ENCODE measurements at regions of chr4 and their contacts with region 1.

Region 1: DNA sequence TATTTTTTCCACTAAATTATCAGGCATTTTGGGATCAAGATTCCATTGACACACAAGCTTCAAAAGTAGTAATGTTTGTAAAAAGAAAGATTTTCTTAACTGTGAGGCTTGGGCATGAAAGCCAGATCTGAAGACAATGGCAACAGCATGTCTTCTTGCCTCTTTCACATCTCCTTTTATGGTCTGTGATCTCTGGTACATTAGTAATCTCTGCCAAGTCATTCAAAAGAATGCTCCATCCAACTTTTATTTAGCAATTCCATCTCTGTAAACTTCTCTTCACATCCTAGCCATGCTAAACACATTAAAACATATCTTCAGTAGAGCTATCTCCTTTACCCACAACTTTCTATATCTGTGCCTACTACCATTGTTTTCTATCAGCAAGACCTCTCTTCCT is 465.4 kb downstream of the FAT4 start:
- DNase-seq: no peak
- ATAC-seq: no peak
- H3K4me3 ChIP-seq: no peak overlapping the region
- H3K27ac ChIP-seq: no peak overlapping the region
- H3K4me1 ChIP-seq: no peaks in the 10 kb centered on the region
- H3K27me3 ChIP-seq: no peaks in the 10 kb centered on the region
- CTCF ChIP-seq: no peak

Region 2: DNA sequence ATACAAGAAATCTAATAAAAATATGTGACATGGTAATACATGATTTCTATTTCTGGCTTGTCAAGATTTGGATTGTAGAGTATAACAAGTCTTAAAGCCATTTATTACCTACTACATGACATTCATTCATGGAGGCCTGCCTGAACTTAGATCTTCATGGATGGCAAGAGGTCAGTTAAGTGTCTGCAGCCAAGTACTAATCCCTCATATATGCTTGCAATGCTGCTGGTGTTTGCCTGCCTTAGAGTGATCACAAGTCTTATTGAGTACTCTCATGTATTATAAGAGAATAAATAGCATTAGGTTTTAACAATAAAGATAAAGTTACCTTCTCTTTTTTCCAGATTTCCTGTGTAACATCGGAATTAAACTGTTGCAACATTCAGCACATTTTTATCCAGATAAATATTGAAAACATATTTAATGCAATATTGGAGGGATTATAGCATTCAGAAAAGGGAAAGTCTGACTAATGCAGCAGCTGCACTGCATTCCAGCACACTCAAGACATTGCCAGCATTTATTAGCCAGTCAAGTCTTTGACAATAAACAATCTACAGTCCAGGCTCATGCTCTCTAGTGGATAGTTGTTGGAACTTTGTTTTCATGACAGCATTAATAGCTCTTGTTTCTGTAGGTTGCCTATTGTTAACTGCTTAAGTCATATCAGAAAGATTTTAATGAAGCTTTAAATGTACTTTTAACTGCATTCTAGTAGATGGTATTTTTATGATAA is 271.7 kb after region 1 on chr4:
- CTCF ChIA-PET with region 1: no interaction called
- POLR2A ChIA-PET with region 1: no interaction called
- intact Hi-C with region 1: loop called (anchors 10 kb)
- DNase-seq: peak; percentile 20
- ATAC-seq: peak; percentile 55
- H3K4me3 ChIP-seq: no peak overlapping the region
- H3K27ac ChIP-seq: no peak overlapping the region
- H3K4me1 ChIP-seq: no peaks in the 10 kb centered on the region
- H3K27me3 ChIP-seq: no peaks in the 10 kb centered on the region
- CTCF ChIP-seq: no peak

Region 3: GRCh38 chr4:126395664-126396063 is 615.5 kb after region 1 on chr4:
- CTCF ChIA-PET with region 1: no interaction called
- POLR2A ChIA-PET with region 1: no interaction called
- intact Hi-C with region 1: loop called (anchors 10 kb)
- DNase-seq: no peak
- ATAC-seq: no peak
- H3K4me3 ChIP-seq: no peak overlapping the region
- H3K27ac ChIP-seq: no peak overlapping the region
- H3K4me1 ChIP-seq: no peaks in the 10 kb centered on the region
- H3K27me3 ChIP-seq: no peaks in the 10 kb centered on the region
- CTCF ChIP-seq: no peak